ENCODE measurements at regions of chr4 and their contacts with region 1.

Region 1: GRCh38 chr4:118981839-118982381 is 93.3 kb downstream of the SYNPO2 start:
- DNase-seq: peak; percentile 68
- H3K4me3 ChIP-seq: no peak overlapping the region
- H3K27ac ChIP-seq: peak overlapping the region; percentile 19 to 87 (median 84)
- H3K4me1 ChIP-seq: peaks cover 0 to 15% (median 3%) of the 10 kb centered on the region in 4 donors
- H3K27me3 ChIP-seq: no peaks in the 10 kb centered on the region
- CTCF ChIP-seq: peak; percentile 70 to 90 (median 74)
- EP300 ChIP-seq: no peak
- POLR2A ChIP-seq: no peak

Region 2: GRCh38 chr4:118772081-118772766 is 209.7 kb before region 1 on chr4:
- in situ Hi-C with region 1: loop called in 1 of 4 experiments (anchors 25 kb)
- intact Hi-C with region 1: no loop called
- DNase-seq: no peak
- H3K4me3 ChIP-seq: no peak overlapping the region
- H3K27ac ChIP-seq: peak overlapping the region; percentile 66 to 81 (median 78)
- H3K4me1 ChIP-seq: peaks cover 0 to 46% (median 9%) of the 10 kb centered on the region in 4 donors
- H3K27me3 ChIP-seq: no peaks in the 10 kb centered on the region
- CTCF ChIP-seq: peak; percentile 49 to 72 (median 57)
- EP300 ChIP-seq: no peak
- POLR2A ChIP-seq: no peak

Region 3: DNA sequence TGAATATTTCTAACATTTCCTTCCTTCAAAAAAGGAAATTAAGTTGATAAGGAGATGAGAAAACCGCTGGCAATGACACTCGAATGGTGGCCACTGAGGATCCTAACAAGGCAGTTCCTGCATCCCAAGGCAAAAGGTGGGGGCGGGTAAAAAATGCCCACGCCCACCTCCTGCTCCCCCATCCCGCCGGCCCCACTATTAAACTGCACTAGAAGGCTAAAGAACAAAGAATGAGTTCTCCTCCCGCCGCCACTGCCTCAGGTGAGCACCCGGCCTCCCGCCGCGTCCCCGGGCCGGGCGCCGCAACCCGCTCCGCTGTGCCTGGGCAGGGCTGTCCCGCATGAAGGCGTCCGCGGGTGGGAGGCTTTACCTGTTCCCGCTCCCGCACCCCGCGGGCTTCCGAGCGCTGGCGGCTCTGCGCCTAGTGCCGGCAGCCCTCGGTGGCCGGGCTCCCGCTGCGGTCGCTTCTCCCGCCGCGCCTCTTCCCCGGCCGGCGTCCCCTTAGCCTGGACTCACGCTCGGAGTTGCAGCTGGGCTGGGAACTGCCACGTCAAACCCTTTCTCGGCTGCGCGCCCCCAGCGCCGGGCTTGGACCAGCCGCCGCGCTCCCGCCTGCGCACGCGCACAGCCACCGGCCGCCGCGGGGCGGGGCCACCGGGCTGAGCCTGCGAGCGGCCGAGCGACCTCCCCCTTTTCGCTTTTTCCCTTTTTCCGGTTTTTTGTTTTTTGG is 146.2 kb before region 1 on chr4 and contains the start of gene SEC24D:
- in situ Hi-C with region 1: no loop called
- intact Hi-C with region 1: no loop called
- DNase-seq: peak; percentile 90
- H3K4me3 ChIP-seq: peak within 1 kb of the TSS; percentile 83 to 97 (median 87)
- H3K27ac ChIP-seq: peak within 1 kb of the TSS; percentile 96 to 99 (median 98)
- H3K4me1 ChIP-seq: peaks cover 7 to 25% (median 11%) of the 10 kb centered on the region in 4 donors
- H3K27me3 ChIP-seq: no peaks in the 10 kb centered on the region
- CTCF ChIP-seq: peak in 1 of 5 experiments; percentile 5
- EP300 ChIP-seq: no peak
- POLR2A ChIP-seq: peak; percentile 75
- total RNA-seq, gene SEC24D: 9.7 to 37.9 (median 17.0) TPM

Region 4: GRCh38 chr4:119034276-119035008 is 52.5 kb after region 1 on chr4:
- in situ Hi-C with region 1: no loop called
- intact Hi-C with region 1: loop called (anchors 5 kb)
- DNase-seq: no peak
- H3K4me3 ChIP-seq: peak overlapping the region in 1 of 4 donors; percentile 22
- H3K27ac ChIP-seq: peak overlapping the region; percentile 85 to 91 (median 88)
- H3K4me1 ChIP-seq: peaks cover 0 to 7% (median 0%) of the 10 kb centered on the region in 4 donors
- H3K27me3 ChIP-seq: no peaks in the 10 kb centered on the region
- CTCF ChIP-seq: no peak
- EP300 ChIP-seq: no peak
- POLR2A ChIP-seq: no peak

Region 5: GRCh38 chr4:119212234-119212963 is 230.5 kb after region 1 on chr4 and contains the start of gene USP53:
- in situ Hi-C with region 1: no loop called
- intact Hi-C with region 1: loop called (anchors 10 kb)
- DNase-seq: peak; percentile 99
- H3K4me3 ChIP-seq: peak within 1 kb of the TSS; percentile 57 to 81 (median 72)
- H3K27ac ChIP-seq: peak within 1 kb of the TSS; percentile 95 to 97 (median 96)
- H3K4me1 ChIP-seq: peaks cover 0 to 41% (median 14%) of the 10 kb centered on the region in 4 donors
- H3K27me3 ChIP-seq: no peaks in the 10 kb centered on the region
- CTCF ChIP-seq: peak in 1 of 5 experiments; percentile 27
- EP300 ChIP-seq: no peak
- POLR2A ChIP-seq: peak; percentile 99
- total RNA-seq, gene USP53: 71.4 to 165 (median 98.5) TPM

Region 6: DNA sequence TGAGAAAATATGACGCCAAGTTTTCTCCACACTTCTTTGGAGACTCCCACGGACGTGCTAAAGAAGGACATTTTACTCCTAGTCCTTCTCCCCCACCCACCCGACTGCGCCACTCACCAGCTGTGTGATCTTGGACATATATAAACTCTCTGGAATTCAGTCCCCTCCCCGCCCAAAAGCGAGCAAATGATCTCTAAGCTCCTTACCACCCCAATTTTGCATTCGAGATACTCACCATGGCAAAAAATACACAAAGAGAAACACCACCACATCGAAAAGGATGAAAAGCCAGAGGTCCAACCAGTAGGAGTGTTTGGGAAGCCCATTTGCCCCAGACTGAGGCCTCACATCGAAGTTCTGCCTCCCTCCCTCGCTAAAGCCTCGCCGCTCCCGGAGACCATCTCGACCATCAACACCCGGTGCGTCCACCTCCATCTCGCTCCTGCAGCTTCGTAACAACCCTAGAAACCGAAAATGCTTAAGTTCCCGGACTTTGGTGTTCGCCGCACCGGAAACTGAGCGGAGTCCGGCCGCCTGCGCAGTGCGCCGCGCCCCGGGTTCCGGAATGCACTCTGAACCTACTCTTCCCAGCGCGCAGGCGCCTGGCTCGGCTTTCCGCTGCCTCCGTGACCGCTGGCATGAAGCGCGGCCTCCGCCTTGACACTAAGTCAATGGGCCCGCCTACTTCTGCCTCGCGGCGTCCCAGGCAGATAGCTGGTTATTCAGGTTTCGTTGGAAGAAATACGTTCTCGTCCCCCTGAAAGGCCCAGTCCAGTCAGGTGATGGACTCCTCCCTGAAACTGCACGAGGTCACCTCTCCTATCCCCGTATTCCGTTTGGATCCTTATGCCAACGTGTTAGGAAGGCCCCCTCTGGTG is 318.4 kb after region 1 on chr4:
- in situ Hi-C with region 1: loop called in 1 of 4 experiments (anchors 10 kb)
- intact Hi-C with region 1: no loop called
- DNase-seq: peak; percentile 97
- H3K4me3 ChIP-seq: peak overlapping the region; percentile 39 to 85 (median 62)
- H3K27ac ChIP-seq: peak overlapping the region; percentile 94 to 97 (median 94)
- H3K4me1 ChIP-seq: peaks cover 6 to 30% (median 27%) of the 10 kb centered on the region in 4 donors
- H3K27me3 ChIP-seq: no peaks in the 10 kb centered on the region
- CTCF ChIP-seq: peak in 2 of 5 experiments; percentile 9 to 40
- EP300 ChIP-seq: peak; percentile 7
- POLR2A ChIP-seq: peak; percentile 91

Region 7: GRCh38 chr4:119490335-119490734 is 508.4 kb after region 1 on chr4:
- in situ Hi-C with region 1: loop called in 3 of 4 experiments (anchors 25 kb)
- intact Hi-C with region 1: no loop called
- DNase-seq: peak; percentile 10
- H3K4me3 ChIP-seq: no peak overlapping the region
- H3K27ac ChIP-seq: no peak overlapping the region
- H3K4me1 ChIP-seq: no peaks in the 10 kb centered on the region
- H3K27me3 ChIP-seq: no peaks in the 10 kb centered on the region
- CTCF ChIP-seq: peak; percentile 21 to 47 (median 38)
- EP300 ChIP-seq: no peak
- POLR2A ChIP-seq: no peak

Measured in transverse colon (tissue), 4 donors.